Heart left ventricle (tissue), 16 donors: ENCODE measurements at regions of chr1 and their contacts with region 1.

Region 1: DNA sequence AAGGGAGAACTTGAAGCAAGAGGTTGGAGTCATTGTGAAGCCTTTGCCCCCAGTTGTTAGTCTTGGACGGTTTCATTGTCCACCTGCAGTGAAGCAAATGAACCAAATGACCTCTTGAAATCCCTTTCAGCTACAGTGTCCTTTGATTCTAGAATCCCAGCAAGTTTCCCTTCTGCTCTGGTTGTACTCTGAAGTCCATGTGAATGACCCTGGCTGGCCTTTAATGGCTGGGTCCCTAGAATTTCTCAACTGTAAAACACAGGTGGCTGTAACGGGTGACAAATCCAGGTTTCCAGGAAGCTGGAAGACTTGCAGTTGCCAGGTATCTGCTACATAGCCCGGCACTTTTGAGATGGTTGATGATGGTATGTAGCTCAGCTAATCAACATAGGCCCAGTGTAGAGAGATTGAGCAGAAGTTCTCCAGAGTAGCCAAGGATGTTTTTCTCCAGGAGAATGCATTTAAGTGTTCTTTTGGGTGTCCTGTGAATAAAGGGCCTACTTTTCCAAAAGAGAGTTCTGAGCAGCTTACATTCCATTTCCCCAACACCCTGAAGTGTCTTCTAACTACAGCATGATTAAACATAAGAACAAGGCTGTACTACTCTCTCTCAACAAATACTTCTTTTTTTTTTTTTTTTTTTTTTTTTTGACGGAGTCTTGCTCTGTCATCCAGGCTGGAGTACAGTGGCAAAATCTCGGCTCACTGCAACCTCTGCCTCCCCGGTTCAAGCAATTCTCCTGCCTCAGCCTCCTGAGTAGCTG is 17.6 kb upstream of the SLC30A1 start:
- DNase-seq: no peak
- ATAC-seq: no peak
- H3K4me3 ChIP-seq: no peak overlapping the region
- H3K27ac ChIP-seq: no peak overlapping the region
- H3K4me1 ChIP-seq: peaks cover 0 to 47% (median 2%) of the 10 kb centered on the region in 12 donors
- H3K27me3 ChIP-seq: no peaks in the 10 kb centered on the region
- CTCF ChIP-seq: no peak
- POLR2A ChIP-seq: no peak

Region 2: DNA sequence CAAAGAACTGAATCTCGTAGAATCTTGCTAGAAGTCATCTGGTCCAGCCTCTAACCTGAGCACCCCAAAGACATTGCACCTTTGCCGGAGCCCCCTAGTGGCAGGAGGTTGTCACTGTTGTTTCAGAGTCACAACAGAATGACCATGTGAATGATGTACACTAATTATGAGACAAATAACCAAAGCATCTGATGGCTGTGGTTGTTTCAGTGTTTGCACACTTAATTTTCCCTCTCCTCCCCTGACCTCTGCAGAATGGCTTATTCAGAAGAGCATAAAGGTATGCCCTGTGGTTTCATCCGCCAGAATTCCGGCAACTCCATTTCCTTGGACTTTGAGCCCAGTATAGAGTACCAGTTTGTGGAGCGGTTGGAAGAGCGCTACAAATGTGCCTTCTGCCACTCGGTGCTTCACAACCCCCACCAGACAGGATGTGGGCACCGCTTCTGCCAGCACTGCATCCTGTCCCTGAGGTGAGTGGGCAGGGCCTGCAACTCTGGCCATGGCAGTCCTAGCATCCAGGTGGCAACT is 243.6 kb before region 1 on chr1:
- intact Hi-C with region 1: no loop called
- DNase-seq: no peak
- ATAC-seq: no peak
- H3K4me3 ChIP-seq: no peak overlapping the region
- H3K27ac ChIP-seq: peak overlapping the region in 1 of 12 donors; percentile 20
- H3K4me1 ChIP-seq: peaks cover 0 to 20% (median 0%) of the 10 kb centered on the region in 12 donors
- H3K27me3 ChIP-seq: no peaks in the 10 kb centered on the region
- CTCF ChIP-seq: peak; percentile 34 to 70 (median 55)
- POLR2A ChIP-seq: no peak

Region 3: DNA sequence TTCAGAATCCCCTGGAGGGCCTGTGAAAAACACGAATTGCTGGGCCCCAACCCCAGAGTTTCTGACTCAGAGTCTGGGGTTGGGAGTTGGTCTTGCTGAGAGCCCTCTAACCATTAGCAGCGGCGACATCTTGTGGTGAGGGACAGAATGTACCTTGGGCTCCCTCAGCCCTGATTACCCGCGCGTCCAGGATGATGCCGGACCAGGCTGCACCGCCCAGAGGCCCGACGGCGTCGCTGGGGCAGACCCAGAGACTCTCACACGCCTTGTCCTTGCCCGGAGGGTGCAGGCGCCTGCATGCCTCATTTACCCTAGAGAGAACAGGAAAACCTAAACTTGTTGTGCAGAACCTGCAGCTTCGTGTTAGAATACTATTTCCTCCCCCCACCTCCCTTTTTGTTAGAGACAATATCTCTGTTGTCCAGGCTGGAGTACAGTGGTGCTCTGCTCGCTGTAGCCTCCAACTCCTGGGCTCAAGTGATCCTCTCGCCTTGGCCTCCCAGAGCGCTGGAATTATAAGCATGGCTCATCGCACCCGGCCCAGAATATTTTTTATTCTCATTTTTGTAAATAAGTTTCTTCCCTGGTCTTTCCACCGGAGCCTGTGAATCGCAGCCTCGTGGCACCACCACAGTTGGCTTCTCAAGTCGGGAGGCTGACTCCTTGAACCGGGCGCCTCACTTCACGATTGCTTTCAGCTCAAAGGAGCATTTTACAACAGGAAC is 82.4 kb before region 1 on chr1:
- intact Hi-C with region 1: no loop called
- DNase-seq: peak; percentile 71 to 87 (median 81)
- ATAC-seq: peak; percentile 86 to 91 (median 88)
- H3K4me3 ChIP-seq: no peak overlapping the region
- H3K27ac ChIP-seq: no peak overlapping the region
- H3K4me1 ChIP-seq: peaks cover 0 to 17% (median 8%) of the 10 kb centered on the region in 12 donors
- H3K27me3 ChIP-seq: peaks cover 0 to 8% (median 0%) of the 10 kb centered on the region in 9 donors
- CTCF ChIP-seq: peak; percentile 64 to 86 (median 75)
- POLR2A ChIP-seq: no peak

Region 4: DNA sequence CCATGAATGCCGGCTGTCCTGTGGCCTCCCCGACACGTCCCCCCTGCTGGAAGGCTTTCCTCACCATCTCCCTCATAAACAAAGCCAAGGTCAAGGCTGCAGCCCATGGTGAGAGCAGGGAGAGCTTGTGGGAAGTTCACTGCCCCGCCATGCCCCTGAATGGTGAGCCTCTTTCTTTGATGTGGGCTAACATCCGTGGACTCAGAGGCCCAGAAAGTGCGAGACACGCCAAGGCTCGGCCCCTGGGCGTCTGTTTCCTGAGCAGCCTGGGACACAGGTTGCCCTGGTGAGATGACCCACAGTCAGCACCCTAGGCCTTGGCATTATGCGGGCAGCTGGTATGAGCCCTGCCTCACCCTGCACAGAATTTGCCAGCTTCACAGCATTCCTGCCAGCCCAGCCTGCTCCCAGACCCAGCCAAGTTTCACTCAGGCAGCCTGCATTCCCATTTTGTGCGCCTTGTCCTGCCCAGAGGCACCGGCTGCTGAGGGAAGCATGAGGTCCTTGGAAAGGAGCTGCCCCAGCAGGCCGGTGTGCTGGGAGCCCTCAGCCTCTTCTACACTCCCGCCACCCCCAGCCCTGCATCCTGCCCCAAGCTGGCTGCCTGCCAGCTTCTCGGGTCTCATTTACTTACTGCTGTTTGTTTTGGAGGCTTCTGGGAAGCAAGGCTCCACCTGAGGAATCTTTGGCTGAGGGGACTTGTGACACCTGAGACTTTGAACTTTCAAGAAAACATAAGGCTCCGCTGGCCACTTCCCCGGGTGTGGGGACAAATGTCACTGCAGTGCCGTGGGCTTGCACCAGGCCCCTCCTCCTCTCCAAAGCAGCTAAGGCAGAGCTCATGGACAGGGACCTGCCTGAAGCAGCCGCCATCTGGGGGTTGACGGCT is 47.0 kb after region 1 on chr1:
- intact Hi-C with region 1: loop called in 1 of 10 experiments (anchors 5 kb)
- DNase-seq: no peak
- ATAC-seq: peak; percentile 49 to 51 (median 50)
- H3K4me3 ChIP-seq: no peak overlapping the region
- H3K27ac ChIP-seq: peak overlapping the region in 3 of 12 donors; percentile 2 to 50 (median 24)
- H3K4me1 ChIP-seq: peaks cover 0 to 16% (median 6%) of the 10 kb centered on the region in 12 donors
- H3K27me3 ChIP-seq: no peaks in the 10 kb centered on the region
- CTCF ChIP-seq: no peak
- POLR2A ChIP-seq: no peak